B cell (primary cell): ENCODE measurements at regions of chr2 and their contacts with region 1.

Region 1: GRCh38 chr2:213036836-213037235 is 114.6 kb downstream of the IKZF2 start:
- DNase-seq: no peak
- ATAC-seq: no peak
- H3K4me3 ChIP-seq: no peak overlapping the region
- H3K4me3 Mint-ChIP-seq: no peak overlapping the region
- H3K27ac ChIP-seq: peak overlapping the region; percentile 7 to 58
- H3K27ac Mint-ChIP-seq: no peak overlapping the region
- H3K4me1 ChIP-seq: peaks cover 35 to 40% of the 10 kb centered on the region in 2 donors
- H3K4me1 Mint-ChIP-seq: peaks cover 51% of the 10 kb centered on the region
- H3K27me3 ChIP-seq: no peaks in the 10 kb centered on the region
- H3K27me3 Mint-ChIP-seq: no peaks in the 10 kb centered on the region
- CTCF ChIP-seq: no peak

Region 2: DNA sequence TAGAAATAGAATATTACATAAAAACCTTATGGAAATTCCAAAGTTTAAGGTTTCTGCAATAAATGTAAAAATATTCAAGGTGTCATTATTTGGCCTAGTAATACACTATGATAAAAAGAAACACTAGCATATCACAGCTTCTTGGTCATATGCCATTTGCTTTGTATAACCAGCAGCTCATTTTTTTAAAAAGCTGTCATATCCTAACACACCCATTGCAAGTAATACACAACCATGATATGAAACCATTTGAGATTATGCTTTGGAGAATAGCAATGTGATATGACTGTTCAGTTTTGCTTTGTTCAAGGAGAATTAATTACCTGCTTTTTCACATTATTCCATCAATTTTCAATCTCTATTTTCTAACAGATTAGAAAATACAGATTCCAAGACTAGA is 34.5 kb before region 1 on chr2:
- CTCF ChIA-PET with region 1: no interaction called
- POLR2A ChIA-PET with region 1: no interaction called
- intact Hi-C with region 1: loop called (anchors 5 kb)
- DNase-seq: no peak
- ATAC-seq: no peak
- H3K4me3 ChIP-seq: no peak overlapping the region
- H3K4me3 Mint-ChIP-seq: no peak overlapping the region
- H3K27ac ChIP-seq: no peak overlapping the region
- H3K27ac Mint-ChIP-seq: no peak overlapping the region
- H3K4me1 ChIP-seq: peaks cover 7 to 20% of the 10 kb centered on the region in 2 donors
- H3K4me1 Mint-ChIP-seq: peaks cover 23% of the 10 kb centered on the region
- H3K27me3 ChIP-seq: no peaks in the 10 kb centered on the region
- H3K27me3 Mint-ChIP-seq: no peaks in the 10 kb centered on the region
- CTCF ChIP-seq: no peak

Region 3: GRCh38 chr2:213079756-213080155 is 42.9 kb after region 1 on chr2:
- CTCF ChIA-PET with region 1: no interaction called
- POLR2A ChIA-PET with region 1: no interaction called
- intact Hi-C with region 1: loop called (anchors 5 kb)
- DNase-seq: no peak
- ATAC-seq: no peak
- H3K4me3 ChIP-seq: no peak overlapping the region
- H3K4me3 Mint-ChIP-seq: no peak overlapping the region
- H3K27ac ChIP-seq: no peak overlapping the region
- H3K27ac Mint-ChIP-seq: no peak overlapping the region
- H3K4me1 ChIP-seq: peaks cover 0 to 11% of the 10 kb centered on the region in 2 donors
- H3K4me1 Mint-ChIP-seq: peaks cover 23% of the 10 kb centered on the region
- H3K27me3 ChIP-seq: no peaks in the 10 kb centered on the region
- H3K27me3 Mint-ChIP-seq: no peaks in the 10 kb centered on the region
- CTCF ChIP-seq: no peak

Region 4: DNA sequence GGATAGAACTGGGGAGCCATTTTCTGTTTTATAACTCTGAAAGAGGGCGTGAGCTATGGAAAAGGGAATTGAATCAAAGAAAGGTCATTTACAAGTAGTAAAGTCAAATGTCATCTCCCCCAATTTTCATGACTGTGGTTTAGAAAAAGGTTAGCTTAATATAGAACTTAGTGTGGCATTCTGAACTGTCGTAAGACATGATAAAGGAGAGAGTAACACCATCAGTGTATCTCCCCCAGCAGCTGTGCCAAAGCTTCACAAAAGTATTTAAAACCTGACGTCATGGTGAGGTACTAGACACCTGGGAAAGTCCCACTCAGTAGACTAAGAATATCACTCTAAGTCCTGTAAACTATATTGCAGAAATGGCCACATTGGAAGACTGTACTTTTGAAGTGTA is 120.4 kb after region 1 on chr2:
- CTCF ChIA-PET with region 1: no interaction called
- POLR2A ChIA-PET with region 1: no interaction called
- intact Hi-C with region 1: loop called (anchors 1 kb)
- DNase-seq: peak; percentile 84
- ATAC-seq: peak; percentile 89
- H3K4me3 ChIP-seq: no peak overlapping the region
- H3K4me3 Mint-ChIP-seq: peak overlapping the region; percentile 23
- H3K27ac ChIP-seq: peak overlapping the region; percentile 53 to 79
- H3K27ac Mint-ChIP-seq: peak overlapping the region; percentile 66
- H3K4me1 ChIP-seq: peaks cover 11 to 27% of the 10 kb centered on the region in 2 donors
- H3K4me1 Mint-ChIP-seq: peaks cover 44% of the 10 kb centered on the region
- H3K27me3 ChIP-seq: no peaks in the 10 kb centered on the region
- H3K27me3 Mint-ChIP-seq: no peaks in the 10 kb centered on the region
- CTCF ChIP-seq: no peak